ENCODE measurements at regions of chr12 and their contacts with region 1.

Region 1: GRCh38 chr12:46124848-46125619 is 134.7 kb upstream of the SCAF11 start:
- DNase-seq: peak; percentile 75
- H3K4me3 ChIP-seq: peak overlapping the region in 1 of 3 experiments; percentile 27
- H3K27ac ChIP-seq: no peak overlapping the region
- H3K4me1 ChIP-seq: peaks cover 4% of the 10 kb centered on the region
- H3K27me3 ChIP-seq: peaks cover 16 to 29% of the 10 kb centered on the region in 2 experiments
- CTCF ChIP-seq: peak; percentile 51 to 53
- POLR2A ChIP-seq: no peak

Region 2: GRCh38 chr12:45762185-45763110 is 362.6 kb before region 1 on chr12:
- CTCF ChIA-PET with region 1: interaction called, 11 read pairs
- POLR2A ChIA-PET with region 1: no interaction called
- dilution Hi-C with region 1: no loop called
- intact Hi-C with region 1: no loop called
- DNase-seq: peak; percentile 70
- H3K4me3 ChIP-seq: no peak overlapping the region
- H3K27ac ChIP-seq: no peak overlapping the region
- H3K4me1 ChIP-seq: no peaks in the 10 kb centered on the region
- H3K27me3 ChIP-seq: no peaks in the 10 kb centered on the region
- CTCF ChIP-seq: peak; percentile 47 to 56
- POLR2A ChIP-seq: no peak

Region 3: GRCh38 chr12:45966486-45966885 is 158.5 kb before region 1 on chr12:
- CTCF ChIA-PET with region 1: no interaction called
- POLR2A ChIA-PET with region 1: no interaction called
- dilution Hi-C with region 1: no loop called
- intact Hi-C with region 1: no loop called
- DNase-seq: peak; percentile 71
- H3K4me3 ChIP-seq: no peak overlapping the region
- H3K27ac ChIP-seq: no peak overlapping the region
- H3K4me1 ChIP-seq: peaks cover 15% of the 10 kb centered on the region
- H3K27me3 ChIP-seq: no peaks in the 10 kb centered on the region
- CTCF ChIP-seq: no peak
- POLR2A ChIP-seq: no peak

Region 4: GRCh38 chr12:46103559-46104383 is 21.3 kb before region 1 on chr12:
- CTCF ChIA-PET with region 1: interaction called, 18 read pairs
- POLR2A ChIA-PET with region 1: no interaction called
- dilution Hi-C with region 1: no loop called
- intact Hi-C with region 1: no loop called
- DNase-seq: no peak
- H3K4me3 ChIP-seq: no peak overlapping the region
- H3K27ac ChIP-seq: no peak overlapping the region
- H3K4me1 ChIP-seq: no peaks in the 10 kb centered on the region
- H3K27me3 ChIP-seq: no peaks in the 10 kb centered on the region
- CTCF ChIP-seq: no peak
- POLR2A ChIP-seq: no peak

Region 5: GRCh38 chr12:46268590-46269558 is 143.8 kb after region 1 on chr12 and contains the start of gene SLC38A1:
- CTCF ChIA-PET with region 1: interaction called, 5 read pairs
- POLR2A ChIA-PET with region 1: no interaction called
- dilution Hi-C with region 1: no loop called
- intact Hi-C with region 1: loop called (anchors 10 kb)
- DNase-seq: peak; percentile 73
- H3K4me3 ChIP-seq: peak within 1 kb of the TSS; percentile 59 to 85 (median 84)
- H3K27ac ChIP-seq: peak within 1 kb of the TSS; percentile 82
- H3K4me1 ChIP-seq: peaks cover 31% of the 10 kb centered on the region
- H3K27me3 ChIP-seq: no peaks in the 10 kb centered on the region
- CTCF ChIP-seq: no peak
- POLR2A ChIP-seq: peak; percentile 66
- total RNA-seq, gene SLC38A1: 81.0 and 86.4 TPM in 2 replicates

Region 6: GRCh38 chr12:46364777-46365580 is 239.9 kb after region 1 on chr12:
- CTCF ChIA-PET with region 1: interaction called, 12 read pairs
- POLR2A ChIA-PET with region 1: interaction called, 3 read pairs
- dilution Hi-C with region 1: no loop called
- intact Hi-C with region 1: no loop called
- DNase-seq: peak; percentile 72
- H3K4me3 ChIP-seq: peak overlapping the region in 1 of 3 experiments; percentile 43
- H3K27ac ChIP-seq: no peak overlapping the region
- H3K4me1 ChIP-seq: peaks cover 62% of the 10 kb centered on the region
- H3K27me3 ChIP-seq: no peaks in the 10 kb centered on the region
- CTCF ChIP-seq: no peak
- POLR2A ChIP-seq: peak; percentile 30

Region 7: DNA sequence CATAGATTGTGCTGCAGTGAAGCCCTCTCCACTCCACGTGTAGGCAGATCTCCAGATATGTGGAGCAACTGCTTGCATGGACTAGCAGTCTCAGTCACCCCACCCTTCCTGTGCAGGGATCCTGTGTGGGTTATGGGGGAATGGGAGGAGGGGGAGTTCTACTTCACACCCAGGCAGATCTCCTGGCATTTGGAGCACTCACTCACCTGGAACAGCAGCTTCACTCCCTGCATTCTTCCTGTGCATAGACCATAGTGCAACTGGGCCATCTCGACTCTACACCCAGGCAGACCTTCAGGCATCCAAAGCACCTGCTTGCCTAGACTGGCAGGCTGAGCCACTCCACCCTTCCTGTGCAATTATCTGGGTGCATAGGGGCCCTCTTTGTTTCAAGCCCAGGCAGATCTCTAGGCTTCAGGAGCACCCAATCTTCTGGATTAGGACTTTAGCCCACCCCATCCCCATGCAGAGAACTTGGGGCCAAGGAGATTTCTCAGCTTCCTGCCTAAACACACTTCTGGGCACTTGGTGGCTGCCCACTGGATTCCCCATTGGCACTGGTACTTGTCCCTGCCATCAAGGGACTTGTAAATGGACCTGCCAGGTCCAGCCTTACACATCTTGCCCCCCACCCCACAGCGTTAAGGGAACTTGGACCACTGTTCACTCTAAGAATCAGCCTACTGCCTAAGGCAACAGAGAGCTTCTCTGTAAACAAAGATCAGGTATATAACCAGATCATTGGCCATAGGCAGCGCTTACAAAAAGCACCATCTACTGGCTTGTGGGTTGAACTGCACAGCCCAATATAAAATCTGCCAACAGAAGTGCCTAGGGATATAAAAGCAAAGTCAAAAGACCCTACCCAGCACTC is 858.6 kb after region 1 on chr12:
- CTCF ChIA-PET with region 1: interaction called, 69 read pairs
- POLR2A ChIA-PET with region 1: no interaction called
- dilution Hi-C with region 1: no loop called
- intact Hi-C with region 1: loop called (anchors 5 kb)
- DNase-seq: peak; percentile 71
- H3K4me3 ChIP-seq: no peak overlapping the region
- H3K27ac ChIP-seq: no peak overlapping the region
- H3K4me1 ChIP-seq: no peaks in the 10 kb centered on the region
- H3K27me3 ChIP-seq: peaks cover 0 to 8% of the 10 kb centered on the region in 2 experiments
- CTCF ChIP-seq: peak; percentile 75 to 76
- POLR2A ChIP-seq: no peak